HEK293 (cell line): ENCODE measurements at regions of chr6 and their contacts with region 1.

Region 1: DNA sequence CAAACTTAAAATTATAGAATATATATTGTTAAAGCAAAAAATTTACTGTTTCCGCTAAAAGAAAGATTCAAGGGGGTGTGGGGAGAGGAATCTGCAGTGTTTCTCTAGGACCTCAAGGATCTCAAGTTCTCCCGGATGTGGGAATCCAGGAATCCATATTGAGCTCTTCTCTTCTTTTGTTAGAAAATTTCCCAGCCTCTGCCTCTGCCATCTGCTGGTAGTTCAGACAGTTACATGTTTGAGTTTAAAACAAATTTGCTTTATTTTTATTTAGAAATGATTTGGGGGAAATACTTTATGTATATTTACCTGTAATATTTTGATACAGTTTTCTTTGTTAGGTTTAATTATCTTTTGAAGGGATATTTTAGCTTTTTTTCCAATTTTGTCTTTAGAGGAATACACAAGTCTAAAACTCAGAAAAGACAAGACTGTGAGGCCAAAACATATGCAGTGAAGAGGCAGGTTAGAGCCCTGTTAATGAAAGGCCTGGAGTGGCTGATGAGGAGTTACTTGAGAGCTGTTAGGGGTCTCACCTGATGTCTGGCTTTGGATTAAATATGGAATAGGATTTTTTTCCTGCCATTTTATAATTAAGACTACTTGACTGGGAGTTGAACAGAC is 268.8 kb downstream of the ARID1B start:
- H3K4me3 ChIP-seq: no peak overlapping the region
- H3K27ac ChIP-seq: no peak overlapping the region
- H3K4me1 ChIP-seq: 0 out of 2 replicates have a peak, but pooled peaks cover 3% of the 10 kb centered on the region
- CTCF ChIP-seq: no peak

Region 2: DNA sequence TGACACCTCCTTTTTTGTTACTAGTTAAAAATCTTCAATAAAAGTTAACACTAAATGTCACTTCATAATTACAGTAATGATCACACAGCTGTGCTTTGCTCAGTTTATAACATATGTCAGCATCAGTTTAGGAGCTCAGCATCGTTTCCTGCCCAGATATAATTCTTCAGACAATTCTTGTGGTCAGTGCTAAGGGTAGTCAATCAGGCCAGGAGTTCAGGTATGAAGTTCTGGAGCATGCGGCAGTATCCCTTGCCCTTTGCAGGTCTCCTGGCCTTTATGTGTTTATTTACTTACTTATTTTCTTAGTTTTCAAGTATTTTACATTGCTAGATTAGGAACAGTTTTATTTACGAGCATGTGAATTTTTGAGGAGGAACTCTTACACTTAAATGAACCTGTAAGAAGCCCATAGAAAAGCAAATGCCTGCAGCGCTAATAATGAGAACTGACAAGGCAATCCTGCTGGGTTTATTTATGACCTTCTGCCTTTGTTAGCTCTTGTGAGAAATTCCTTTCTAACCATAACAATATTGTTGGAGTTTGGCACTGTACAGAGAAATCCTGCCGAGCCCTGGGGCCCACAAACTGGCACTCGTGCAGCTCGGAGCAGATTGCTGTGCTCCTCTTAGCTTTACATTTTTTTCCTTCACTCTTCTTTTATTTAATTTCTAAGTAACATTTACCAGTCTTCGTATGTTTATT is 24.6 kb after region 1 on chr6:
- CTCF ChIA-PET with region 1: interaction called, 21 read pairs
- POLR2A ChIA-PET with region 1: no interaction called
- H3K4me3 ChIP-seq: no peak overlapping the region
- H3K27ac ChIP-seq: no peak overlapping the region
- H3K4me1 ChIP-seq: peaks cover 16% of the 10 kb centered on the region
- CTCF ChIP-seq: no peak

Region 3: DNA sequence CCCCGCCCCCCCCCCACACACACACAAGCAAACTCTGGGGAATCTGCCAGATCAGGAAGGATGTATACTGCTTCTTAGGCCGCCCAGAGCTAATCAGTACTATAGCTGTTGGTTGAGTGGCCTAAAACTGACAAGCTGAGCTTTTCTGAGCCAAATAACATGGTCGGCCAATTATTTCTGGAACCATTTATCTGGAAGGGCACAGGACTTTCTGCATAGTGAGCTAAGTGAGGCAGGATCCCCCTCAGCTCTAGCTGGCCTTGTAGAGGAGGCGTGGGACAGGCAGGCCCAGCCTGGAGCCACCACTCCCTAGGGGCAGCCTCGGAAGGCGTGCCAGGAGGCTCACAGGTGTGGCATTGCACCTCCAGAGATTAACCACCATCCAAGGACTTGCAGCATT is 77.3 kb after region 1 on chr6:
- CTCF ChIA-PET with region 1: no interaction called
- POLR2A ChIA-PET with region 1: no interaction called
- H3K4me3 ChIP-seq: no peak overlapping the region
- H3K27ac ChIP-seq: no peak overlapping the region
- H3K4me1 ChIP-seq: no peaks in the 10 kb centered on the region
- CTCF ChIP-seq: no peak

Region 4: DNA sequence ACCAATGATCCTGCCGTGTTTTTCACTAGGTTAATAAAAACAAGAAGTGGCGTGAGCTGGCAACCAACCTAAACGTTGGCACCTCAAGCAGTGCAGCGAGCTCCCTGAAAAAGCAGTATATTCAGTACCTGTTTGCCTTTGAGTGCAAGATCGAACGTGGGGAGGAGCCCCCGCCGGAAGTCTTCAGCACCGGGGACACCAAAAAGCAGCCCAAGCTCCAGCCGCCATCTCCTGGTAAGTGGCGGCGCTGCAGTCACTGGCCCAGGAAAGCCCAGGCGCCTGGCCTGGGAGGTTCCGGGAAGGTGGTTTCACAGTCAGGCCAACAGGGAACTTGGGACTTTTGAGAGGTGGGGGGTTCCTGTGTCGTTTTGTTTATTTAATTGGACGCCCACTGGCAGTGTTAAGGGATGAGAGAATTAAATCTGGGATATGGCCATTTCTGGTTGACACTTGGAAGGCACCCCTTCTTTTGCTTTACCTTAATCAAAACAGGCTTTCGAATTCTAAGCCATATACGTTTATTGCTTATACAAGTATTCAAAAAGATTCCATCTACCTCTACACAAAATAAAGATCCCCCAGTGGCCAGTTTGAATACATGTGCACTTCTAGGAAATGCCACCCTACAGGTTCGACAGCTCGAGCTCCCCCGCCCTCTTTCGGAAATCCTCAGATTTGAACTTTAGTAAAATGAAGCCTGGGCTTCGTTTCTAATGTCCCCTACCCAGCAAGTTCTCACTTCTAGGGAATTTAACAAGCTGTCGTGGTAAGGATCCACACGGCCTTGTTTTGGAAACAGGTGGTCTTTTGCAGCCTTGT is 138.5 kb after region 1 on chr6:
- CTCF ChIA-PET with region 1: interaction called, 10 read pairs
- POLR2A ChIA-PET with region 1: no interaction called
- H3K4me3 ChIP-seq: no peak overlapping the region
- H3K27ac ChIP-seq: no peak overlapping the region
- H3K4me1 ChIP-seq: peaks cover 13% of the 10 kb centered on the region
- CTCF ChIP-seq: peak; percentile 61